ENCODE measurements at regions of chr22 and their contacts with region 1.

Region 1: DNA sequence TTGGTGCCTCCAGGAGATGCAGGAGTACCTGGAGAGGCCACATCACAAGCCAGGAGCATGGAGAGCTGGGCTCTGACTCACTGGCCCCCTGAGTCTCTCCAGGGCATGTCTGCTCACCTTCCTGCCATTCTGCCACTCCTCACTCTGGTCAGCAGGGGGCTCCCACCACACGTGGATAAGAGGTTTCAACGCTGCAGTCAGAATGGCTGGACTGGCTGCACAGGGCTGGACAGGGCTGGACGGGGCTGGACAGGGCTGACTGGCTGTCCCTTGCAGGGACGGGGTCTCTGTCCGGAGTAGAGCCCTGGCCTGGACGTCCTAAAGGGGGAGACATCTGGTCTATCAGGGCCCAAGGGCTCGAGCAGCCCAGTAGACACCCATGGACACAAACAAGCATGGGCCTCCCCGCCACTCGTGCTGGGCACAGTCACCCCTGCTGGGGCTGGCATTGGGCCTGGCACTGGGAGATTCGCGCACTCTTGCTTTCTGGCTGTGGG is 34.6 kb downstream of the CYTH4 start:
- DNase-seq: peak; percentile 92
- H3K4me3 ChIP-seq: no peak overlapping the region; a peak in 1 of 4 replicates
- H3K27ac ChIP-seq: no peak overlapping the region
- H3K4me1 ChIP-seq: no peaks in the 10 kb centered on the region
- H3K27me3 ChIP-seq: no peaks in the 10 kb centered on the region
- CTCF ChIP-seq: peak; percentile 90
- EP300 ChIP-seq: no peak
- RAD21 ChIP-seq: peak; percentile 99

Region 2: DNA sequence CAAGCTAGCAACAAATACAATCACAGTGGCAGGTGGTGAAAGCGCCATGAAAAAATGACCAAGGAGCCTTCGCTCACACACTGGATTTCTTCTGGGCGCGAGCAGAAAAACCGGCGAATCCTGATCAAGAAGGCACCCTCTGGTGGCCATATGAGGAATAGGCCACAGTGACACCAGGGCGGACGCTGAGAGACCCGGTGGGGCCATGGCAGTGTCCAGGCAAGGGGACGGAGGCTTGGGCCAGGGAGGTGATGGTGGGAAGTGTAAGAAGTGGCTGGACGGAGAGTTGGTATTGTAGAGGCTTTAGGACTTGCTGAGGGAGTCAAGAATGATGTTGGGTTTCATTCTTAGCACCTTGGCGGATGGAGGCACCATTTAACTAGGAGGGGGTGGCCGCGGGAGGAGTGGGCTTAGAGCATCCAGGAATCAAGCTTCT is 56.0 kb before region 1 on chr22:
- CTCF ChIA-PET with region 1: interaction called, 12 read pairs
- POLR2A ChIA-PET with region 1: no interaction called
- DNase-seq: peak; percentile 84
- H3K4me3 ChIP-seq: peak overlapping the region in 1 of 2 experiments; percentile 16; a peak in 2 of 4 replicates
- H3K27ac ChIP-seq: no peak overlapping the region
- H3K4me1 ChIP-seq: peaks cover 2 to 3% of the 10 kb centered on the region in 2 experiments; a peak in 1 of 4 replicates
- H3K27me3 ChIP-seq: no peaks in the 10 kb centered on the region
- CTCF ChIP-seq: peak; percentile 91
- EP300 ChIP-seq: no peak
- RAD21 ChIP-seq: peak; percentile 68

Region 3: GRCh38 chr22:37353839-37354238 is 36.9 kb after region 1 on chr22:
- CTCF ChIA-PET with region 1: no interaction called
- POLR2A ChIA-PET with region 1: no interaction called
- DNase-seq: no peak
- H3K4me3 ChIP-seq: no peak overlapping the region
- H3K27ac ChIP-seq: no peak overlapping the region
- H3K4me1 ChIP-seq: peaks cover 0 to 5% of the 10 kb centered on the region in 2 experiments; a peak in 1 of 4 replicates
- H3K27me3 ChIP-seq: no peaks in the 10 kb centered on the region
- CTCF ChIP-seq: no peak
- EP300 ChIP-seq: no peak
- RAD21 ChIP-seq: no peak

Region 4: GRCh38 chr22:37419969-37420685 is 103.2 kb after region 1 on chr22:
- CTCF ChIA-PET with region 1: interaction called, 17 read pairs
- POLR2A ChIA-PET with region 1: no interaction called
- DNase-seq: peak; percentile 84
- H3K4me3 ChIP-seq: peak overlapping the region; percentile 40 to 51
- H3K27ac ChIP-seq: no peak overlapping the region
- H3K4me1 ChIP-seq: peaks cover 0 to 4% of the 10 kb centered on the region in 2 experiments; a peak in 1 of 4 replicates
- H3K27me3 ChIP-seq: peaks cover 5% of the 10 kb centered on the region; the same call in 1 of the 2 replicates
- CTCF ChIP-seq: no peak
- EP300 ChIP-seq: no peak
- RAD21 ChIP-seq: no peak

Region 5: DNA sequence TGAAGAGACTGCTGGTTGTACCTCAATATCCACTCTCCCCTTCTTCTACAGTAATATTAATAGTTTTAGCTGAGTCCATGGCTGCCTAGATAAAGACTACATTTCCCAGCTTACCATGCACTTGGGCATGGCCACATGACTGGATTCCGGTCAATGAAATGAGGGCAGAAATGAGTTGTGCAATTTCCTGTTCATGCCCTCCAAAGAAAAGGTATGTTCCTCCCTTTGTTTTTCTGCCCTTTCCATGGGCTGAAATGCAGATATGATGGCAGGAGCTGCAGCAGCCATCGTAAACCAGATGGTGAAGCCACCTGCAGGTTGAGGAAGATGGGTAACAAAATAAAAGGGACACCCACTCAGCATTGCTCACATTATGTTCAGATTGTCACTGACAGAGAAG is 125.6 kb after region 1 on chr22:
- CTCF ChIA-PET with region 1: interaction called, 33 read pairs
- POLR2A ChIA-PET with region 1: no interaction called
- DNase-seq: no peak
- H3K4me3 ChIP-seq: no peak overlapping the region
- H3K27ac ChIP-seq: no peak overlapping the region
- H3K4me1 ChIP-seq: no peaks in the 10 kb centered on the region
- H3K27me3 ChIP-seq: no peaks in the 10 kb centered on the region
- CTCF ChIP-seq: no peak
- EP300 ChIP-seq: no peak
- RAD21 ChIP-seq: no peak

Region 6: DNA sequence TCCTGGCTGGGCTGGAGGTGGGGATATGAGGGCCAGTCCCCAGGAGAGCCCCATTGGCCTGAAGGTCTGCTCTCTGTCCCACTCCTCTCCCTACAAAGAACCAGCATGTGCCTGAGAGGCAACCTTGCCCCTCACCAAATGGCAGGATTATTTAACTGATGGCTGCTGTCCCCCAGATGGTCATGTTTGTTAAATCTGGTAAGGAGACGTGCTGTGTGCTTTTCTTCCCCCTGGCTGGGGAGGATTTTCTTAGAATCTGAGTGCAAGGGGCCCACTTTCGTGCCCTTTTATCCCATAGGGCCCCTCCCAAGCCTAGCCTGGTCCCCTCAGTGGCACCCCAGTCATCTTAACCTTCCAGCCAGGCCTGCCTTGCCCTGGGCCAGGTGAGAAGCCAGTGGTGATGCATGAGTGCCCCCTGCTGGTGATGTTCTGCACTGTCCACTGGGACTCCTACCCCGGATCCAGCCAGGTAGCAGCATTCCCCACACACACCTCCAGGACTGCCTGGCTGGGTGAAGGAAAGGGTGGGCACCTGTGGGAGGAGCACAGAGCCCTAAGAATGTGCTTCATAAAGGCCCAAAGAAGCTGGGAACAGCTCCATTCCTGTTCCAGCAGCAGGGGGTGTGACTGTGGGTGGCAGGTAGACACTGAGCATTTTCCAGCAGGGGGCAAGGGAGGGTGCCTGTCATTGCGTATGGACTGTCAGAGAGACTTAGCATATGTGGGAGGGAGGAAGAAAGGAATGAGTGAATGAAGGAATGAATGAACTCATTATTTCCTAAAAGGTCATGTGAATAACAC is 140.4 kb after region 1 on chr22:
- CTCF ChIA-PET with region 1: interaction called, 203 read pairs
- POLR2A ChIA-PET with region 1: no interaction called
- DNase-seq: peak; percentile 85
- H3K4me3 ChIP-seq: no peak overlapping the region; a peak in 1 of 4 replicates
- H3K27ac ChIP-seq: no peak overlapping the region
- H3K4me1 ChIP-seq: peaks cover 8 to 16% of the 10 kb centered on the region in 2 experiments; a peak in 2 of 4 replicates
- H3K27me3 ChIP-seq: no peaks in the 10 kb centered on the region
- CTCF ChIP-seq: peak; percentile 96
- EP300 ChIP-seq: no peak
- RAD21 ChIP-seq: peak; percentile 98

Region 7: GRCh38 chr22:37472418-37473006 is 155.6 kb after region 1 on chr22:
- CTCF ChIA-PET with region 1: interaction called, 10 read pairs
- POLR2A ChIA-PET with region 1: no interaction called
- DNase-seq: peak; percentile 75
- H3K4me3 ChIP-seq: no peak overlapping the region
- H3K27ac ChIP-seq: no peak overlapping the region
- H3K4me1 ChIP-seq: no peaks in the 10 kb centered on the region; a peak in 1 of 4 replicates
- H3K27me3 ChIP-seq: no peaks in the 10 kb centered on the region
- CTCF ChIP-seq: peak; percentile 63
- EP300 ChIP-seq: no peak
- RAD21 ChIP-seq: peak; percentile 53

Measured in SK-N-SH (cell line).